ENCODE measurements at regions of chr1 and their contacts with region 1.

Region 1: GRCh38 chr1:3727042-3727824 is 25.0 kb upstream of the CCDC27 start:
- DNase-seq: no peak
- ATAC-seq: no peak
- H3K4me3 ChIP-seq: no peak overlapping the region
- H3K27ac ChIP-seq: no peak overlapping the region
- H3K4me1 ChIP-seq: peaks cover 12 to 14% of the 10 kb centered on the region in 2 donors
- H3K27me3 ChIP-seq: peaks cover 7 to 17% (median 16%) of the 10 kb centered on the region in 3 donors
- CTCF ChIP-seq: no peak
- POLR2A ChIP-seq: no peak

Region 2: GRCh38 chr1:3695326-3696217 is 31.7 kb before region 1 on chr1:
- in situ Hi-C with region 1: no loop called
- intact Hi-C with region 1: loop called (anchors 1 kb)
- DNase-seq: no peak
- ATAC-seq: peak; percentile 54 to 61
- H3K4me3 ChIP-seq: no peak overlapping the region
- H3K27ac ChIP-seq: no peak overlapping the region
- H3K4me1 ChIP-seq: no peaks in the 10 kb centered on the region
- H3K27me3 ChIP-seq: peaks cover 0 to 10% (median 0%) of the 10 kb centered on the region in 3 donors
- CTCF ChIP-seq: peak; percentile 65 to 85 (median 78)
- POLR2A ChIP-seq: no peak

Region 3: GRCh38 chr1:4284976-4285375 is 557.7 kb after region 1 on chr1:
- in situ Hi-C with region 1: no loop called
- intact Hi-C with region 1: no loop called
- DNase-seq: no peak
- ATAC-seq: no peak
- H3K4me3 ChIP-seq: no peak overlapping the region
- H3K27ac ChIP-seq: no peak overlapping the region
- H3K4me1 ChIP-seq: no peaks in the 10 kb centered on the region
- H3K27me3 ChIP-seq: no peaks in the 10 kb centered on the region
- CTCF ChIP-seq: no peak
- POLR2A ChIP-seq: no peak

Measured in gastrocnemius medialis (tissue), 4 donors.